ENCODE measurements at regions of chr10 and their contacts with region 1.

Region 1: DNA sequence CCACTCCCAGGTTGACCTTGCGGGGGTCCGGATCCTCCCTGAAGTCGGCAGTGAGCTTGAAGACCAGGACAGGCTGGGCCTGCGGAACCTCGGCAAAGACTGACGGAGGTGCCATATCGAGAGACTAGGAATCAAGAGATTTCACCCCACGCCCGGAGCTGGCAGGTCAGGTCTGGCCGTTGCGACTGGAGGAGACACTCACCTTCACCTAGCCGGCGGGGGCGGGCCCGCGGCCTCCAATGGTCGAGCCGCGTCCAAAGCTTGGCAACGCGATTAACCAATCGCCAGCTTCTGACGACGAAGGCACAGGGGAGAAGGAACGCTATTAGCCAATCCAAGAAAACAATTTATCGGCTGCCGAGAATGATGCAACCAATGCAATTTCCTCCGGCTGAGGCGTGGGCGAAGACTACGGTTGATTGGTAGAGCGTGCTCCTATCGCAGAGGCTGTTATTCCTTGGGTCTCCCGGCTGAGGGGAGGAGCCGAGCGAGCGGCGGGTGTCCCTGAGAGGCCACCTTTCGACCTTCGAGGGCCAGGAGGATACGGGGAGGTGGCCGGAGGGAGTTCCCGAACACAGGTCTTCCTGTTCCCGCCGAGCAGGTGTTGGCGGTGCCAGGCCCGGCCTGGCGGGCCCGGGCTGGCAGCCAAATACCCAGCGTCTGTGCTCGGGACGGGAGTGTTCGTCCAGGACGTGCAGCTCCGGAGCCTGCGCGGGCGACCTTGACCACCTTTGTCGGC is at the start of gene GOT1:
- DNase-seq: peak; percentile 95 to 98 (median 96)
- ATAC-seq: peak; percentile 98
- H3K4me3 ChIP-seq: peak within 1 kb of the TSS; percentile 75 to 86
- H3K27ac ChIP-seq: peak within 1 kb of the TSS; percentile 92 to 93
- H3K4me1 ChIP-seq: peaks cover 7 to 24% of the 10 kb centered on the region in 2 donors
- H3K27me3 ChIP-seq: no peaks in the 10 kb centered on the region
- CTCF ChIP-seq: no peak
- polyA plus RNA-seq, gene GOT1: 26.5 to 32.5 (median 29.4) TPM

Region 2: DNA sequence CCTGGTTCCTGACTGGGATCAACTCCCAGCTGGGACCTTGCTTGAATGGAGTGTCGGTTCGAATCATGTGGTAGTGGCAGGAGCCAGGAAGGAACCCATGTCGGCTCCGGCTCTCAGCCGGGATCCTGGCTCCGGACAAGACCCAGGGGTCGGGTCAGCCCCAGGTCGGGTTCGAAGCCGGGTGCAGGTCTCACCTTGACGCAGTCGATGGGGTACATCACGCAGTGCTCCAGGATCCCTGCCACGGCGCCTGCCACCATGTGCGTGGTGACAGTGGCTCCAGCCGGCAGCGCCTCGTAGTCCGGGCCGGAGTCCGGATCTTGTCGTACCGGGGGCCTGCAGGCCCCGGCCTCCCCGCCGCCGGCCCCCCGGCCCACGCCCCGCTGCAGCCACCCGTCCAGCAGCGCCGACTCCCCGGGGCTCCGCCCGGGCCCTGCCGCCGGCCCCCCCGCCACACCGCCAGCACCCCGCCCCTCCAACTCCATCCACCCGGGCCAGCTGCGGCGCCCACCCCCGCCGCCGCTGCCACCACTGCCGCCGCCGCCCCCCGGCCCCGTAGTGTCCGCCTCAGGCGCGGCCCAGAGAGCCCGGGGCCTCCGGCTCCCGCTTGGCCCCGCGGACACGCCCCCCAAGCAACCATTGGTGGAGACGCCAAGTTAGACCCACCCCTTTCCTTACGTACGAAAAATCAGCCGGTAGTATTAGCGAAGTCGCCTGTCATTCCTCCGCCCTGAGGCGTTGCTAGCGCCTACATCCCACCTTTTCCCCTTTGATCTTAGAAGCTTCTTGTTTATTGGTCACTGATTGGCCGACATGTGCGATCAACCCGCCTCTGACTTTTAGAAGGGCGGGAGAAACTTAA is 189.5 kb after region 1 on chr10 and contains the start of gene SLC25A28:
- intact Hi-C with region 1: loop called in 1 of 2 experiments (anchors 10 kb)
- DNase-seq: peak; percentile 95 to 99 (median 98)
- ATAC-seq: peak; percentile 87
- H3K4me3 ChIP-seq: peak within 1 kb of the TSS; percentile 82 to 91
- H3K27ac ChIP-seq: peak within 1 kb of the TSS; percentile 98
- H3K4me1 ChIP-seq: peaks cover 31 to 50% of the 10 kb centered on the region in 2 donors
- H3K27me3 ChIP-seq: no peaks in the 10 kb centered on the region
- CTCF ChIP-seq: no peak
- polyA plus RNA-seq, gene SLC25A28: 42.9 to 55.7 (median 49.3) TPM

Measured in left lung (tissue), 14 donors.